Mammary epithelial cell (primary cell): ENCODE measurements at regions of chr10 and their contacts with region 1.

Region 1: DNA sequence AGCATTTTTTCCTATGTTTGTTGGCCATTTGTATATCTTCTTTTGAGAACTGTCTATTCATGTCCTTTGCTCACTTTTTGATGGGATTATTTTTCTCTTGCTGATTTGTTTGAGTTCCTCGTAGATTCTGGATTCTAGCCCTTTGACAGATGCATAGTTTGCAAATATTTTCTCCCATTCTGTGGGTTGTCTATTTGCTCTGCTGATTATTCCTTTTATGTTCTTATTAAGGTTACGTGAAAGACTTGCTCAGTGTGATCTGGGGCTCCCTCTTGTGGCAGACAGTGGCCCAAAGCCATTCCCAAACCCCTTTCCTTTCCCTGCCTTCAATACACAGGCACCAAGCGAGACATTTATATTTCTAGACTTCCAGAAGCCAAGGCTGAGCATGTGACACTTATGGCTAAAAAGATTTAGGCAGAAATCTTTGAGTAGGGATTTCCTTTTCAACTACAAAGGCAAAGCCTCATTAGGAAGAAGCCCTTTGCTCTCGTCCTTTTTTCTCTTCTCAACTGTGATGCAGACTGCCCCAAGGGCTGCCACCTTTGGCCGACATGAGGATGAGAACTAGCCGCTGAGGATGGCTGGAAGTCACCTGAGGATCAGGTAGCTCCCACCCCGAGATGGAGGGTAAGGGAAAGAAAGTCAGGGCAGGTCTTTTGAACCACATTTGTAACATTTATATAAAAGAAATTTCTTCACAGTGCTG is 23.6 kb downstream of the ST8SIA6 start:
- DNase-seq: peak; percentile 59
- H3K4me3 ChIP-seq: no peak overlapping the region
- H3K27ac ChIP-seq: no peak overlapping the region
- H3K4me1 ChIP-seq: no peaks in the 10 kb centered on the region
- H3K27me3 ChIP-seq: no peaks in the 10 kb centered on the region
- CTCF ChIP-seq: peak; percentile 92 to 95

Region 2: DNA sequence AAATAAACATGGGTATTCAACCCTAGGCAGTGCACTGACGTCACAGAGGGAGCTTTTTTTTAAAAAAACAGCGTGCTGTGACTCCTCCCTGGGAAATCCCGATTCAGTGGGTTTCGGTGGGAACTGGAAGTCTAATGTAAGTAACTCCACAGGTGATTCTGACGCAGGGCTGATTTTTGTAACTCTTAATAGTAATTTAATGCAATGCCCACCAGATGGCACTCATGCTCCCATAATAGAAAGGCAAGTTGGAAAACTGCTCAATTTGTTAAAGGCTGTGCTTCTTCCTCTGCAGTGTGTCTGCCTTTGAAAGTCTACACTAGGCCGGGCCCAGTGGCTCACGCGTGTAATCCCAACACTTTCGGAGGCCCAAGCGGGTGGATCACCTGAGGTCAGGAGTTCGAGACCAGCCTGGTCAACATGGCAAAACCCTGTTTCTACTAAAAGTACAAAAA is 602.7 kb before region 1 on chr10:
- CTCF ChIA-PET with region 1: no interaction called
- dilution Hi-C with region 1: no loop called
- in situ Hi-C with region 1: loop called (anchors 25 kb)
- intact Hi-C with region 1: loop called (anchors 5 kb)
- DNase-seq: peak; percentile 69
- H3K4me3 ChIP-seq: no peak overlapping the region
- H3K27ac ChIP-seq: no peak overlapping the region
- H3K4me1 ChIP-seq: peaks cover 13% of the 10 kb centered on the region
- H3K27me3 ChIP-seq: no peaks in the 10 kb centered on the region
- CTCF ChIP-seq: peak; percentile 41 to 61

Region 3: DNA sequence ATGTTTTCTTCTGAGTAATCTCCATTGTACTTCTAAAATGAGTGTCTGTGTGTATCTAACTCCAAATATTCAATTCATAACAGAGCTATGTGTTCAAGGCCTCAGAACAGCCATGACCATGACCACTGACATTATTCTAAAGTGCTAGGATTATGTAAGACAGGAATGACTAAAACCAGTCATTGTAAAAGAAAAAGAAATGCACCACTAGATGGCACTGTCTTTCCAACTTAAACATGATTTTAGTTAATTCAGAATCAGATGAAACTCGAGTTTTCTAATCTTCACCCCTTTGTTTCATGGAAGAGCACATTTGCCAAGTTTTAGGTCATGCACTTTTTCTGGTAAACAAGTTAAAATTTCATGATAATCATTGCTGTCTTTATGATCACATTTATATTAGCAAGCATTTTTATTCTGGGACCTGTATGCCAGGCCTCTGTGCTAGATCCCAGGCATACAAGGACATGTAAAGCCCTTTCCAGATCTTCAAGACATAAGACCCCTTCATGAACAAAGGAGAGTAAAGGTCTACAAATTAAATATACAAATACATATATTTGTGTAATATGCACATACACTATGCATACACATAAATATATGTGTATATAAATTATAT is 587.4 kb before region 1 on chr10:
- CTCF ChIA-PET with region 1: no interaction called
- dilution Hi-C with region 1: no loop called
- in situ Hi-C with region 1: loop called (anchors 25 kb)
- intact Hi-C with region 1: loop called (anchors 5 kb)
- DNase-seq: peak; percentile 61
- H3K4me3 ChIP-seq: no peak overlapping the region
- H3K27ac ChIP-seq: no peak overlapping the region
- H3K4me1 ChIP-seq: peaks cover 2% of the 10 kb centered on the region
- H3K27me3 ChIP-seq: no peaks in the 10 kb centered on the region
- CTCF ChIP-seq: peak; percentile 38 to 43

Region 4: GRCh38 chr10:17257466-17258321 is 173.1 kb before region 1 on chr10:
- CTCF ChIA-PET with region 1: no interaction called
- dilution Hi-C with region 1: no loop called
- in situ Hi-C with region 1: no loop called
- intact Hi-C with region 1: loop called (anchors 1 kb)
- DNase-seq: peak; percentile 58
- H3K4me3 ChIP-seq: no peak overlapping the region
- H3K27ac ChIP-seq: no peak overlapping the region
- H3K4me1 ChIP-seq: no peaks in the 10 kb centered on the region
- H3K27me3 ChIP-seq: no peaks in the 10 kb centered on the region
- CTCF ChIP-seq: peak; percentile 83 to 86

Region 5: GRCh38 chr10:17290226-17290625 is 140.6 kb before region 1 on chr10:
- CTCF ChIA-PET with region 1: no interaction called
- dilution Hi-C with region 1: no loop called
- in situ Hi-C with region 1: loop called (anchors 5 to 10 kb)
- intact Hi-C with region 1: loop called (anchors 1 kb)
- DNase-seq: peak; percentile 23
- H3K4me3 ChIP-seq: no peak overlapping the region
- H3K27ac ChIP-seq: no peak overlapping the region
- H3K4me1 ChIP-seq: no peaks in the 10 kb centered on the region
- H3K27me3 ChIP-seq: no peaks in the 10 kb centered on the region
- CTCF ChIP-seq: peak; percentile 34 to 63

Region 6: DNA sequence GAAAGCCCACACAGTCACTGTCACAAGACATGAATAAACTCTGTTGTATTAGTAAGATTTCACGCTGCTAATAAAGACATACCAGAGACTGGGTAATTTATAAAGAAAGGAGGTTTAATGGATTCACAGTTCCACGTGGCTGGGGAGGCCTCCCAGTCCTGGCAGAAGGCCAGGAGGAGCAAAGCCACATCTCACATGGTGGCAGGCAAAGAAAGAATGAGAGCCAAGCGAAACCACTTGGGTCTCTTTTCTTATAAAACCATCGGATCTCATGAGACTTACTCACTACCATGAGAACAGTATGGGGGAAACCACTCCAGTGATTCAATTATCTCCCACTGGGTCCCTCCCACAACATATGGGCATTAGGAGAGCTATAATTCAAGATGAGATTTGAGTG is 86.6 kb before region 1 on chr10:
- CTCF ChIA-PET with region 1: no interaction called
- dilution Hi-C with region 1: no loop called
- in situ Hi-C with region 1: no loop called
- intact Hi-C with region 1: no loop called
- DNase-seq: no peak
- H3K4me3 ChIP-seq: no peak overlapping the region
- H3K27ac ChIP-seq: no peak overlapping the region
- H3K4me1 ChIP-seq: peaks cover 9% of the 10 kb centered on the region
- H3K27me3 ChIP-seq: no peaks in the 10 kb centered on the region
- CTCF ChIP-seq: no peak

Region 7: GRCh38 chr10:17387861-17388508 is 42.8 kb before region 1 on chr10:
- CTCF ChIA-PET with region 1: no interaction called
- dilution Hi-C with region 1: loop called (anchors 5 kb)
- in situ Hi-C with region 1: no loop called
- intact Hi-C with region 1: no loop called
- DNase-seq: peak; percentile 67
- H3K4me3 ChIP-seq: no peak overlapping the region
- H3K27ac ChIP-seq: no peak overlapping the region
- H3K4me1 ChIP-seq: peaks cover 11% of the 10 kb centered on the region
- H3K27me3 ChIP-seq: no peaks in the 10 kb centered on the region
- CTCF ChIP-seq: no peak

Region 8: GRCh38 chr10:17872191-17873091 is 441.6 kb after region 1 on chr10:
- CTCF ChIA-PET with region 1: no interaction called
- dilution Hi-C with region 1: no loop called
- in situ Hi-C with region 1: no loop called
- intact Hi-C with region 1: loop called (anchors 5 kb)
- DNase-seq: peak; percentile 8
- H3K4me3 ChIP-seq: no peak overlapping the region
- H3K27ac ChIP-seq: no peak overlapping the region
- H3K4me1 ChIP-seq: no peaks in the 10 kb centered on the region
- H3K27me3 ChIP-seq: no peaks in the 10 kb centered on the region
- CTCF ChIP-seq: peak; percentile 36 to 59